Activated naive CD4-positive, alpha-beta T cell treated with anti-CD3 and anti-CD28 coated beads for 36 hours (primary cell): ENCODE measurements at regions of chr18 and their contacts with region 1.

Region 1: GRCh38 chr18:13353084-13353823 is 134.7 kb downstream of the LDLRAD4 start:
- DNase-seq: peak; percentile 32
- H3K4me3 Mint-ChIP-seq: no peak overlapping the region
- H3K27ac Mint-ChIP-seq: peak overlapping the region; percentile 64
- H3K4me1 Mint-ChIP-seq: peaks cover 15% of the 10 kb centered on the region
- H3K27me3 Mint-ChIP-seq: no peaks in the 10 kb centered on the region

Region 2: DNA sequence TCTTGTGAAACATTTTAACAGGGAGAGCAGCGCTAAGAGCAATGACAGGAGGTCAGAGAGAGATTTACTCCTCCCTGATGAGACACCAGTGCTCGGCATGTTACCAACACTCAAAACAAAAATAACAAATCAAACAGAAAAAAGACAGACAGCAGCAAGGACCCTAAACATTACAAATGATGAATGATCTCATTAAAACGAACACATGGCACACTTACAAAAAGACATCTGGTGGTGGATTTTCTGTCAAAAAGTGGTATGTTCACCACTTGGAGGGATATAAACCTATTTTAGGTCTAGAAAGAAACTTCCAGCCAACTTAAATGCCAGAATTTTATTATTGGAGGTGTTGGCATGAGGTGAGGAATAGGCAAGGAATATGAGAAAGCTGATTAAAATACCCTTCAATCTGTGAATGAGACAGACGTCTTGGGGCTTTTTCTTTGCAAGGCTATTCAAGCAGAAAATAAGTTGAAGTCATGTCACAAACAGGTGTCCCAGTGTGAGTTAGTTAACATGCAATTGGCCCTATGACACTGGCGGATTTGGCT is 832.7 kb before region 1 on chr18:
- CTCF ChIA-PET with region 1: no interaction called
- intact Hi-C with region 1: no loop called
- DNase-seq: no peak
- H3K4me3 Mint-ChIP-seq: no peak overlapping the region
- H3K27ac Mint-ChIP-seq: no peak overlapping the region
- H3K4me1 Mint-ChIP-seq: no peaks in the 10 kb centered on the region
- H3K27me3 Mint-ChIP-seq: no peaks in the 10 kb centered on the region

Region 3: GRCh38 chr18:13166023-13166422 is 187.2 kb before region 1 on chr18:
- CTCF ChIA-PET with region 1: no interaction called
- intact Hi-C with region 1: no loop called
- DNase-seq: no peak
- H3K4me3 Mint-ChIP-seq: no peak overlapping the region
- H3K27ac Mint-ChIP-seq: no peak overlapping the region
- H3K4me1 Mint-ChIP-seq: no peaks in the 10 kb centered on the region
- H3K27me3 Mint-ChIP-seq: peaks cover 8% of the 10 kb centered on the region

Region 4: GRCh38 chr18:13364721-13365205 is 11.5 kb after region 1 on chr18:
- CTCF ChIA-PET with region 1: no interaction called
- intact Hi-C with region 1: no loop called
- DNase-seq: no peak
- H3K4me3 Mint-ChIP-seq: no peak overlapping the region
- H3K27ac Mint-ChIP-seq: no peak overlapping the region
- H3K4me1 Mint-ChIP-seq: peaks cover 8% of the 10 kb centered on the region
- H3K27me3 Mint-ChIP-seq: no peaks in the 10 kb centered on the region

Region 5: DNA sequence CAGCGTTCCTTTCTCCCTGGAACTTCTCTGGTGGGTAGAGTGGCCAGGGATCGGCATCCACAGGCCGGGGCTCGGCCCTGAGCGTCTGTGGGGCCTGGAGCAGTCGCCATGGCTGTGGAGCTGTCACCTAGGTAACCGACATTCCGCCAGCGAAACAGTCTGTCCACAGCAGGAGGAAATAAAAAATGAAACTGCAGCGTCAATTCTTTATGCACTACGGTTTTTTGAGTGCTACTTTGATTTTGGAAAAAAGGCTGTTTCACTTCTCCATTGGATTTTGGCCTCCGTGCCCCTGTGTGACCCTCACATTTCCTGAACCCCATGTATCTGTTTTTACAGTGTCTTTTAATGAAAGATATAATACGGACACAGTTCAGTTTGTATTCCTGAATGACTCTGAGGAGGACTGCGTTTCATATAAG is 28.7 kb after region 1 on chr18:
- CTCF ChIA-PET with region 1: no interaction called
- intact Hi-C with region 1: loop called (anchors 2 kb)
- DNase-seq: peak; percentile 54
- H3K4me3 Mint-ChIP-seq: peak overlapping the region; percentile 71
- H3K27ac Mint-ChIP-seq: peak overlapping the region; percentile 94
- H3K4me1 Mint-ChIP-seq: peaks cover 72% of the 10 kb centered on the region
- H3K27me3 Mint-ChIP-seq: no peaks in the 10 kb centered on the region